Aorta (tissue), 5 donors: ENCODE measurements at regions of chr1 and their contacts with region 1.

Region 1: GRCh38 chr1:246971090-246971721 is 36.7 kb downstream of the ZNF695 start:
- DNase-seq: peak in 1 of 2 donors; percentile 66
- ATAC-seq: no peak
- H3K4me3 ChIP-seq: no peak overlapping the region
- H3K27ac ChIP-seq: no peak overlapping the region
- H3K4me1 ChIP-seq: no peaks in the 10 kb centered on the region
- H3K27me3 ChIP-seq: no peaks in the 10 kb centered on the region

Region 2: DNA sequence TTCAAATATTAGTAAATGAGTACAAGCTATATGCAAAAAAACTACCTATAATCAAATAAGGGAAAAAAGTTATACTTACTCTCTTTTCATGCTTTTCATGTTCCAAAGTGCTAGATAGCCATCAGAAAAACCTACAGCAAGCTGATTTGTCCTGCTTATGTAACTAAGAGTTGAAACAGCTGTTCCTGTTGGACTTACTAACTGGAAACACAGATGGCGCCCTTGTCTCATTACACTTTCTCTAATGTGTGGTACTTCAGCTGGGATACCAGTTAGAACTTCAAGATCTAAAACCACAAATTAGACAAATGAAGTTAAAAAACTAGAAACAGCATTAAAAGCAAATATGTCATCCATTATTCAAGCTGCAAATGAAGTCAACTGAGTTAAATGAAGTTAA is 63.7 kb before region 1 on chr1:
- intact Hi-C with region 1: loop called in 1 of 2 experiments (anchors 5 kb)
- DNase-seq: no peak
- ATAC-seq: no peak
- H3K4me3 ChIP-seq: no peak overlapping the region
- H3K27ac ChIP-seq: no peak overlapping the region
- H3K4me1 ChIP-seq: no peaks in the 10 kb centered on the region
- H3K27me3 ChIP-seq: no peaks in the 10 kb centered on the region